MCF 10A (cell line): ENCODE measurements at regions of chr6 and their contacts with region 1.

Region 1: GRCh38 chr6:112180095-112180820 is 74.1 kb downstream of the LAMA4 start:
- DNase-seq: peak; percentile 92
- H3K4me3 Mint-ChIP-seq: no peak overlapping the region
- H3K27ac Mint-ChIP-seq: no peak overlapping the region
- H3K4me1 Mint-ChIP-seq: peaks cover 5% of the 10 kb centered on the region
- H3K27me3 Mint-ChIP-seq: no peaks in the 10 kb centered on the region
- CTCF ChIP-seq: peak; percentile 56

Region 2: GRCh38 chr6:111105578-111105977 is 1074.7 kb before region 1 on chr6:
- CTCF ChIA-PET with region 1: no interaction called
- POLR2A ChIA-PET with region 1: no interaction called
- intact Hi-C with region 1: no loop called
- DNase-seq: peak; percentile 86
- H3K4me3 Mint-ChIP-seq: no peak overlapping the region
- H3K27ac Mint-ChIP-seq: no peak overlapping the region
- H3K4me1 Mint-ChIP-seq: peaks cover 13% of the 10 kb centered on the region
- H3K27me3 Mint-ChIP-seq: peaks cover 27% of the 10 kb centered on the region
- CTCF ChIP-seq: no peak

Region 3: DNA sequence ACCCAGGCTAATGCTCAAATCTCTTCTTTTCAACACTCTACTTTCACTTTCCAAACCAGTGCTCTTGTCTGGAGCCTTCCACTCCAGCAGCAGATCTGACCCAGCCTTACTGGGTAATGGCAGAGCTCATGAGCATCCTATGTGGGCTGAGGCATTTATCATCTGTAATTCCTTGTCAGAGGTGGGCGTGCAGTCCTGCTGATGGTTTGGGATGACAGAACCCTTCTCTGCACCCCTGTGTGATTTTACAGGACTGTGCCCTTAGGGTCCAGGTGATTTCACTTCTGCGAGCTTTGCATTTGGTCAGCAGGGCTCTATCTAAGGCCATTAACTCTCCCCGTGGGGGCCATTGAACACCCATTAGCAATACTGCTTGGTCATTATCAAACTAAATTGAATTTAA is 18.7 kb after region 1 on chr6:
- CTCF ChIA-PET with region 1: interaction called, 12 read pairs
- POLR2A ChIA-PET with region 1: no interaction called
- intact Hi-C with region 1: no loop called
- DNase-seq: no peak
- H3K4me3 Mint-ChIP-seq: no peak overlapping the region
- H3K27ac Mint-ChIP-seq: no peak overlapping the region
- H3K4me1 Mint-ChIP-seq: peaks cover 7% of the 10 kb centered on the region
- H3K27me3 Mint-ChIP-seq: no peaks in the 10 kb centered on the region
- CTCF ChIP-seq: no peak

Region 4: GRCh38 chr6:112296122-112296521 is 115.9 kb after region 1 on chr6:
- CTCF ChIA-PET with region 1: interaction called, 12 read pairs
- POLR2A ChIA-PET with region 1: no interaction called
- intact Hi-C with region 1: no loop called
- DNase-seq: peak; percentile 55
- H3K4me3 Mint-ChIP-seq: no peak overlapping the region
- H3K27ac Mint-ChIP-seq: no peak overlapping the region
- H3K4me1 Mint-ChIP-seq: peaks cover 25% of the 10 kb centered on the region
- H3K27me3 Mint-ChIP-seq: no peaks in the 10 kb centered on the region
- CTCF ChIP-seq: peak; percentile 21

Region 5: DNA sequence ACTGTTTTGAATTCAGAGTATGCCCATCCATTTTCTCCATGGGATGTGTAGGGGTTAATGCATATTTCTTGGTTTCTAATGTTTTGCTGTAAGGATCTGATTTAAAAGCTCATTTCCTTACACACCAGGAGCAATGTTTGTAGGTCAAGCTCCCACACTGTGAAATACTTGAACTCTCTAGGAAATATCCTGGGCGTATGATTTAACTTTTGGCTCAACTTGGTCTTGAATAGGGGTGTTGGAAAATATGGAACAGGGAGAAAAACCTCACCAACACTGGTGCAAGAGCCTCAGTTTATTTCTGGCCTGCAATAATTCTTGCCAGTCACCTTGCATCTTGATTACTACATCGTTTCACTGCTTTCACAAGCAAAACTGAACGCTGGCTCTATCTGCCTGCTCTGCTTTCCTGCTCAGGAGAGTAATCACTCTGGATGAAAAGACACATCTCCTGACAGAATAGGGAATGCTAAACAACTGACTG is 141.7 kb after region 1 on chr6:
- CTCF ChIA-PET with region 1: interaction called, 33 read pairs
- POLR2A ChIA-PET with region 1: no interaction called
- intact Hi-C with region 1: no loop called
- DNase-seq: no peak
- H3K4me3 Mint-ChIP-seq: no peak overlapping the region
- H3K27ac Mint-ChIP-seq: no peak overlapping the region
- H3K4me1 Mint-ChIP-seq: no peaks in the 10 kb centered on the region
- H3K27me3 Mint-ChIP-seq: no peaks in the 10 kb centered on the region
- CTCF ChIP-seq: no peak

Region 6: GRCh38 chr6:113909234-113909856 is 1729.1 kb after region 1 on chr6:
- CTCF ChIA-PET with region 1: interaction called, 3 read pairs
- POLR2A ChIA-PET with region 1: no interaction called
- intact Hi-C with region 1: loop called (anchors 1 kb)
- DNase-seq: peak; percentile 61
- H3K4me3 Mint-ChIP-seq: no peak overlapping the region
- H3K27ac Mint-ChIP-seq: no peak overlapping the region
- H3K4me1 Mint-ChIP-seq: no peaks in the 10 kb centered on the region
- H3K27me3 Mint-ChIP-seq: no peaks in the 10 kb centered on the region
- CTCF ChIP-seq: peak; percentile 53